CD4-positive, alpha-beta memory T cell (primary cell): ENCODE measurements at regions of chr10 and their contacts with region 1.

Region 1: GRCh38 chr10:123154092-123154921 is at the start of gene BUB3:
- DNase-seq: peak; percentile 93 to 96 (median 95)
- H3K4me3 ChIP-seq: peak within 1 kb of the TSS; percentile 68 to 94
- H3K4me3 Mint-ChIP-seq: peak within 1 kb of the TSS; percentile 100
- H3K27ac ChIP-seq: peak within 1 kb of the TSS; percentile 79
- H3K27ac Mint-ChIP-seq: peak within 1 kb of the TSS; percentile 94 to 99 (median 99)
- H3K4me1 ChIP-seq: peaks cover 73% of the 10 kb centered on the region
- H3K4me1 Mint-ChIP-seq: peaks cover 44 to 84% (median 64%) of the 10 kb centered on the region in 4 donors
- H3K27me3 ChIP-seq: peaks cover 10% of the 10 kb centered on the region
- H3K27me3 Mint-ChIP-seq: peaks cover 9 to 14% of the 10 kb centered on the region in 2 donors
- total RNA-seq, gene BUB3: 162 to 169 TPM

Region 2: DNA sequence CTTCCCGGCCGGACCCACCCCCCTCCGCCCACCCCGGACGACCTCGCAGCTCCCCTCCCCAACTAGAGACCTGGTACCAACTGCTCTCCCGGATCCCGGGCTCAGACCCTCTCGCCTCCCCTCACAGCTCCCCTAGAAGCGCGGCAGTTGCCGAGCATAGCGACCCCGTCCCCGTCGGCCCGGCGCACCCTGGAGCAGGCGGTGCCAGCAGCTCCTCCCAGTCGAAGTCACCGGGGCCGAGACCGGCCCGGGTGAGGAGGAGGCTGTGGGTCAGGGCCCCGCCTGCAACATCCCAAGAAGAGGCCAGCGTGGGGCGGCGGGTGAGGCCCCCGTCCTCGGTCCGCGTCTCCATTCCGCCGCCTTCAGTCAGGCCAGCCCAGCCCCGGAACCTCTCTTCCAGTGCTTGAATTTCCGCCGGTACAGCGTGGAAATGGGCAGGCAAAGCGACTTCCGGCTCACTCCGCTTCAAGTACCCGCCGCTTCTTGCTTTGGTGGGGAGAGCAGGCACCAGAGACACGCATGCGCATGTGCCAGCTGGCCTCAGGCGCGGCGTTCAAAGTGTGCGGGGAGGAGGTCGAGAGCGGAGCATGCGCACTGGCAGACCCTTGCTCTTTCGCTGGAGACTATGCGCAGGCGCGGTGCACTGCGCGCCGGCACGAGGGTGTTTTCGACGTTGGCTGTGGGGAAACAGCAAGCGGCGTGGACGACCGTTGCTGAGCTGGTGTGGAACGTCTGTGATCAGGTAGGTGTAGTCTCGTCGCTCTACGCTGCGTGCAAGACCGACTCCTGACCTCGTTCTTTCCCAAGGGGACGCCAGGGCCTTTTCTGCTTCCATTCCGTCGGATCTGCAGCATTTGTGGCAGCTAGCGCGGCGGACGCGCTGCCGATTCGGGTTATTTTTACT is 200.2 kb before region 1 on chr10 and contains the start of gene C10orf88:
- CTCF ChIA-PET with region 1: no interaction called
- POLR2A ChIA-PET with region 1: interaction called, 4 read pairs
- intact Hi-C with region 1: loop called (anchors 1 kb)
- DNase-seq: peak; percentile 95 to 98 (median 98)
- H3K4me3 ChIP-seq: peak within 1 kb of the TSS; percentile 47 to 73
- H3K4me3 Mint-ChIP-seq: peak within 1 kb of the TSS; percentile 90 to 97 (median 92)
- H3K27ac ChIP-seq: peak within 1 kb of the TSS; percentile 57
- H3K27ac Mint-ChIP-seq: peak within 1 kb of the TSS; percentile 87 to 98 (median 93)
- H3K4me1 ChIP-seq: peaks cover 27% of the 10 kb centered on the region
- H3K4me1 Mint-ChIP-seq: peaks cover 17 to 43% (median 33%) of the 10 kb centered on the region in 4 donors
- H3K27me3 ChIP-seq: no peaks in the 10 kb centered on the region
- H3K27me3 Mint-ChIP-seq: peaks cover 0 to 2% of the 10 kb centered on the region in 2 donors
- total RNA-seq, gene C10orf88: 10.5 to 12.3 TPM

Region 3: DNA sequence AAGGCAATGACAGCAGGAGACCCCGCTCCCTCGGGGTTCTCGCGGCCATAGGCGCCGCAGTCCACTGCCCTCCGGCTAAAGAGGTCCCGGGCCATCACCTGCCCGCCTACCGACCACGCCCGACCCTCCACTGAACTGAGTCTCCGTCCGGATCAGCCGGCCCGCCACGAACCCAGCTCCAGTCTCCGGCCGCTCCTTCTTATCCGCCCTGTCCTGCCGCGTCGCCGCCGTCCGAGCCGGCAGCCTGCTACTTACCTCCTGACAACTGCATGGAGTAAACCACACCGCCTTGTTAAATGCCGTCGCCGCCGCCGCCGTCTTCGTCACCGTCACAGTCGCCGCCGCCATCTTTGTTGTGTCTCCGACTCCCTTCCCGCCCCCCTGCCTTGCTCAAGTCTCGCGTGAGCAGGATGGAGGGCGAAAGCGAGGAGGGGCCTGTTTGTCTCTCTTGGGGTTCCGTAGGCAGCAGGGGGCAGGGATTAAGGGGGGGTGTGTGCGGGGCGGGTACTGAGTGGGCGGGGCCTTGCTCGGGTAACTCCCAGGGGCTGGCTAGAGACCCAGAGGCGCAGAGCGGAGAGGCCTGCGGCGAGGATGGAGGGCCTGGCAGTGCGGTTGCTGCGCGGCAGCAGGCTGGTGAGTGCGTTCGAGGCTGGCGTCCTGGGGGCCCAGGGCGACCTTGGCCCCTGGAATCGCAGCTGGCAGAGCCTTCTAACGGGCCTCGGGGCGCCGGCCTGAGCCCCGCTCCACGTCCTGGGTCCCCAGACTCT is 145.7 kb before region 1 on chr10 and contains the starts of genes ACADSB and IKZF5:
- CTCF ChIA-PET with region 1: no interaction called
- POLR2A ChIA-PET with region 1: interaction called, 38 read pairs
- intact Hi-C with region 1: loop called (anchors 1 kb)
- DNase-seq: peak; percentile 95 to 99 (median 97)
- H3K4me3 ChIP-seq: peak within 1 kb of the TSS; percentile 68 to 87
- H3K4me3 Mint-ChIP-seq: peak within 1 kb of the TSS; percentile 96 to 100 (median 99)
- H3K27ac ChIP-seq: peak within 1 kb of the TSS; percentile 91
- H3K27ac Mint-ChIP-seq: peak within 1 kb of the TSS; percentile 92 to 100 (median 99)
- H3K4me1 ChIP-seq: peaks cover 57% of the 10 kb centered on the region
- H3K4me1 Mint-ChIP-seq: peaks cover 41 to 72% (median 55%) of the 10 kb centered on the region in 4 donors
- H3K27me3 ChIP-seq: no peaks in the 10 kb centered on the region
- H3K27me3 Mint-ChIP-seq: no peaks in the 10 kb centered on the region
- total RNA-seq, gene ACADSB: 35.7 to 36.4 TPM
- total RNA-seq, gene IKZF5: 37.4 to 45.9 TPM

Region 4: DNA sequence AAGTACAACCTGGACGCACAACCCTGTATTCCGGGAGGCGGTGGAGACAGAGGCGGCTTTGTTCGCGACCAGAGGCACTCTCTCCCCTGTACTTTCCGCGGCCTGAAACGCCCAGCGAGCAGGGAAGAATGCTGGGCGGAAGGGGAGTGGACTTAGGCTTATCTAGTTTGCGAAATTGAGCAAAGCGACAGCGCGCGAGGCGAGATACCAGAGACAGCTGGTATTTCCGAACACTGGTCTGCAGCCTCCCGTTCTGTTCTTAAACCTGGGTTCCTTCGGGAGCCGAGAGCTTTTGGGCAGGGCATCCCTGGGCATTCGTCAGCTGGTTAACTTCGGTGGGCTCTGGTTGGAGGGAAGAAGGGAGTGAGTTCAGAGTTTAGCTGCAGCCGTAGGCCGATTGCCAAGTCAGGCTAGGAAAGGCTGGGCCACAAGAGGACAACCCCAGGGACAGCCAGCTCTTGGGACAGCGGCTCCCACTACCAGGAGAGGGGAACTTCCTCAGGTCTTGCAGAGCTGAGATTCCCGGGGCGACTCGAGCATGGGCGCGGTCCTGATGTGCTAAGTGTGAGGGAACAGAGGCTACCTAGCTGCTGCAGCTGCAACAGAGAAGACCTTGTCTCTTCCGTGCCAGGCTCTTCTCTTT is 14.7 kb before region 1 on chr10:
- CTCF ChIA-PET with region 1: interaction called, 16 read pairs
- POLR2A ChIA-PET with region 1: interaction called, 10 read pairs
- intact Hi-C with region 1: loop called (anchors 2 kb)
- DNase-seq: no peak
- H3K4me3 ChIP-seq: no peak overlapping the region
- H3K4me3 Mint-ChIP-seq: peak overlapping the region in 6 of 8 donors; percentile 14 to 78 (median 39)
- H3K27ac ChIP-seq: no peak overlapping the region
- H3K27ac Mint-ChIP-seq: peak overlapping the region in 1 of 7 donors; percentile 67
- H3K4me1 ChIP-seq: peaks cover 75% of the 10 kb centered on the region
- H3K4me1 Mint-ChIP-seq: peaks cover 22 to 81% (median 50%) of the 10 kb centered on the region in 4 donors
- H3K27me3 ChIP-seq: peaks cover 73% of the 10 kb centered on the region
- H3K27me3 Mint-ChIP-seq: peaks cover 57 to 67% of the 10 kb centered on the region in 2 donors

Region 5: DNA sequence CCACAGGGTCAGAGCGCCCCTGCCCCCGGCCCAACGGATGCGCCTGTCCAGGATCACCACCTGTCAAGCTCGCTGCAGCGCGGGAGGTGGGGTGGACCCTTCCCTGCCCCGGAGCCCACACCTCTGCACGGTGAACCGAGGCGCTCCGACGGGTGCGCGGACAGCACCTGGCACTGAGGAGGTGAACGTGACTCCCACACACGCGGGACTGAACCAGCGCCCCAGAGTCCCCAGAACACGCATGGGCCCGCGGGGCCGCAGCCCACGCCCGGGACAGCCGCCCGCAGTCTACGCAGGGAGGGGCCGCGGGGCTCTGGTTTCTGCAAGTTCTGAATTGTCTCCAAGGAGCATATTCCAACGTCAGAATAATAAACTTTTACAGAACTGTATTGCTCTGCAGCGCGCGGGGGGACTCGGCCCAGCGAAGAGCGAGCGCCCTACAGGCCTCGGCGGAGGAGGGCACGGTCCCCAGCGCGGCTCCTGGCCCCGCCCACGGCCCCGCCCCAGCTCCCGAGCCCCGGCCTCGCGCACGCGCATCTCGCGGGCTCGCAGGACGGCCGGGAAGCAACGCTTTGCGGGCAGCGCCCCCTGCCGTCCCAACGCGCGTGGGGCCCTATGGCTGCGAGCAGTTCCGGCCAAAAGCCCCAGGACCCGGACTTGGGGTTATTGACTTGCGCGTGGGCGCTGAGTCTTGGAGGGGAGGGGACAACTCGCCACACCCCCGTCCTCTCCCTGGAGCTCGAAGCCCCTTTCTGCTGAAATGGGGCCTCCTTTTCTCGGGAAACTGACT is 1234.7 kb after region 1 on chr10:
- CTCF ChIA-PET with region 1: no interaction called
- POLR2A ChIA-PET with region 1: no interaction called
- intact Hi-C with region 1: loop called (anchors 2 kb)
- DNase-seq: peak; percentile 86 to 92 (median 90)
- H3K4me3 ChIP-seq: peak overlapping the region in 1 of 2 donors; percentile 71
- H3K4me3 Mint-ChIP-seq: peak overlapping the region in 6 of 8 donors; percentile 27 to 73 (median 66)
- H3K27ac ChIP-seq: peak overlapping the region; percentile 29
- H3K27ac Mint-ChIP-seq: peak overlapping the region in 1 of 7 donors; percentile 30
- H3K4me1 ChIP-seq: peaks cover 11% of the 10 kb centered on the region
- H3K4me1 Mint-ChIP-seq: peaks cover 0 to 5% (median 2%) of the 10 kb centered on the region in 4 donors
- H3K27me3 ChIP-seq: no peaks in the 10 kb centered on the region
- H3K27me3 Mint-ChIP-seq: peaks cover 0 to 7% of the 10 kb centered on the region in 2 donors

Region 6: GRCh38 chr10:124916585-124917427 is 1762.5 kb after region 1 on chr10:
- CTCF ChIA-PET with region 1: no interaction called
- POLR2A ChIA-PET with region 1: no interaction called
- intact Hi-C with region 1: loop called (anchors 10 kb)
- DNase-seq: peak; percentile 94 to 97 (median 95)
- H3K4me3 ChIP-seq: peak overlapping the region; percentile 61 to 87
- H3K4me3 Mint-ChIP-seq: peak overlapping the region; percentile 86 to 96 (median 92)
- H3K27ac ChIP-seq: peak overlapping the region; percentile 83
- H3K27ac Mint-ChIP-seq: peak overlapping the region; percentile 90 to 98 (median 98)
- H3K4me1 ChIP-seq: peaks cover 33% of the 10 kb centered on the region
- H3K4me1 Mint-ChIP-seq: peaks cover 24 to 42% (median 35%) of the 10 kb centered on the region in 4 donors
- H3K27me3 ChIP-seq: no peaks in the 10 kb centered on the region
- H3K27me3 Mint-ChIP-seq: no peaks in the 10 kb centered on the region